ENCODE measurements at regions of chr21 and their contacts with region 1.

Region 1: GRCh38 chr21:45287438-45288391 is at the start of gene POFUT2:
- DNase-seq: peak; percentile 100
- ATAC-seq: peak; percentile 78
- H3K4me3 Mint-ChIP-seq: peak within 1 kb of the TSS; percentile 87
- H3K27ac Mint-ChIP-seq: peak within 1 kb of the TSS; percentile 80
- H3K4me1 Mint-ChIP-seq: peaks cover 12% of the 10 kb centered on the region
- H3K27me3 Mint-ChIP-seq: no peaks in the 10 kb centered on the region
- total RNA-seq, gene POFUT2: 26.0 to 27.0 TPM

Region 2: DNA sequence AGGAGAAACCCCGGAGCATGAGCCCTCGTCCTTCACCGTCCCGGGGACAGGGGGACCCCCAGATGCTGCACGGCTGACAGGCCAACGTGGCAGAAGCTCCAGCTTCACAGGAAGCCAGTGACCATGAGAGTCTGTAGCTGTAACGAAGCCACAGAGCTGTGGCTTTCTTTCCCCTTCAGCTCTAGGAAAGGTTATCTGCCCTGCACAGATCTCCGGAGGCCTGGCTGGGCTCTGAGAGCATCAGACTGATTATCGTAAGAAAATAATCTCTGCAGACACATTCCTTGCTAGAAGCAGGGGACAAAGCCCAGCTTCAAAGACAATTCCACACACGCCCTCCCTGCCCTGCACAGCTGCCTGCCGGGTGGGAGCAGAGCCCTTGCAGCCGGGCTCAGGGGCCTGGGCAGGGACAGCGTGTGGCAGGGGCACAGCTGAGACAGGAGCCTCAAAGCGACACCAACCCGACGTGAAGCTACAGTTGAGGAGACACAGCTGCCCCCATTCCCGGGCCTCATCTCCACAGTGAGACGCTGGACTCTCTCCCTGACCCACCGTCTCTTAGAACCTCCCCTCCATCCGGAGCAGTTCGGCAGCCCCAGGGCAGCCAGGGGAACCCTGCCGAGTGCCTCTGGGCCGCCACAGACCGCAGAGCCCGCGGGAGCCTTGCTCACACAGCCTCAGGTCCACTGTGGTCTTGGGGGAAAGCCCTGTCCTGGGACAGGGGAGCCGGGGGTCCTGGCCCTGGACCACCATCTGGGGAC is 30.6 kb before region 1 on chr21:
- POLR2A ChIA-PET with region 1: interaction called, 10 read pairs
- DNase-seq: peak; percentile 63
- ATAC-seq: peak; percentile 86
- H3K4me3 Mint-ChIP-seq: peak overlapping the region; percentile 61
- H3K27ac Mint-ChIP-seq: peak overlapping the region; percentile 80
- H3K4me1 Mint-ChIP-seq: peaks cover 13% of the 10 kb centered on the region
- H3K27me3 Mint-ChIP-seq: peaks cover 17% of the 10 kb centered on the region

Measured in activated naive CD8-positive, alpha-beta T cell treated with anti-CD3 and anti-CD28 coated beads, Interleukin-2, amount 10 ng/mL, durations not matched to agents 7 days and 5 days (primary cell).